Posterior vena cava (tissue), 2 donors: ENCODE measurements at regions of chr12 and their contacts with region 1.

Region 1: DNA sequence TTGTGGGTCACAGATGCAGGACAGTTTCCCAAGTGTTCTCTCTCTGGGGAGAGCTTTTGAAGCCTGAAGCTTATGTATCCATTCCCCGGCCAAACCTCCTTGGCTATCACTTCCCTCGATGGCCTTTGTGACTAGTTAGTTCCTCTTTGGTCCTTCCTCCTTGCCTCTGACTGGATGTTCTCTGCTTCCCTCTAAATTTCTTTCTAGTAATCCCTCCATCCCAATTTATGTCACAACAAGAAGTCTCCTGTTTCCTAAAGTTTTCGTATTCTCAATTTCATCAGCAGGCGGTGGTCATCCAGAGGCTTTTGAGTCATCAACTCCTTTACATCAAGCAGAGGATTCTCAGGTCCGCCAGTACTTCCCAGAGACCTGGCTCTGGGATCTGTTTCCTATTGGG is 27.5 kb downstream of the A2ML1 start:
- DNase-seq: no peak

Region 2: DNA sequence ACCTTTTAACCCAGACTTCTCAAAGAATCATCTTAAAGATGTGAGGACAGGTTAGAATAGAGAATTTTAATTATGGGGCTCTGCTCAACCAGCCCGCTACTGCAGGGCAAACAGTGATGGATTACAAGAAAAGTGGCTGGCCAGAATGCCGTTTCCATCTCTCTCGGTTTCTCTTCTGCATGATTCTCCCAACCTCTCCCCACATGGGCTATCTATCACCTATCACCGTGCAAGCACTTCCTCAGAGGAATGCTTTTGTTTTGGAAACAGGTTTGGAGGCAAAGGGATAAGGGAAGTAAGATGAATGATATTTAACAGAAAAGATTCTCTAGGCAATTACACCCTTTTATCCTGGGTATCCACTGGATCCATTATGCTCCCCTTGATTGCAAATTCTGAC is 27.0 kb after region 1 on chr12:
- intact Hi-C with region 1: loop called in 1 of 2 experiments (anchors 1 kb)
- DNase-seq: no peak